ENCODE measurements at regions of chr1 and their contacts with region 1.

Region 1: GRCh38 chr1:205273551-205273982 is 45.8 kb downstream of the TMCC2 start:
- DNase-seq: peak; percentile 79 to 91
- ATAC-seq: peak; percentile 71 to 82 (median 80)
- H3K4me3 ChIP-seq: no peak overlapping the region
- H3K27ac ChIP-seq: no peak overlapping the region
- H3K4me1 ChIP-seq: peaks cover 32% of the 10 kb centered on the region
- H3K27me3 ChIP-seq: no peaks in the 10 kb centered on the region
- CTCF ChIP-seq: peak; percentile 99

Region 2: GRCh38 chr1:205325334-205325884 is 51.8 kb after region 1 on chr1:
- intact Hi-C with region 1: loop called (anchors 1 kb)
- DNase-seq: no peak
- ATAC-seq: peak; percentile 50 to 57 (median 56)
- H3K4me3 ChIP-seq: no peak overlapping the region
- H3K27ac ChIP-seq: no peak overlapping the region
- H3K4me1 ChIP-seq: peaks cover 19% of the 10 kb centered on the region
- H3K27me3 ChIP-seq: no peaks in the 10 kb centered on the region
- CTCF ChIP-seq: peak; percentile 83

Region 3: GRCh38 chr1:205438213-205439157 is 164.9 kb after region 1 on chr1:
- intact Hi-C with region 1: loop called in 1 of 2 experiments (anchors 5 kb)
- DNase-seq: peak; percentile 75 to 88
- ATAC-seq: peak; percentile 69 to 87 (median 78)
- H3K4me3 ChIP-seq: no peak overlapping the region
- H3K27ac ChIP-seq: peak overlapping the region; percentile 12
- H3K4me1 ChIP-seq: peaks cover 61% of the 10 kb centered on the region
- H3K27me3 ChIP-seq: no peaks in the 10 kb centered on the region
- CTCF ChIP-seq: peak; percentile 68

Region 4: DNA sequence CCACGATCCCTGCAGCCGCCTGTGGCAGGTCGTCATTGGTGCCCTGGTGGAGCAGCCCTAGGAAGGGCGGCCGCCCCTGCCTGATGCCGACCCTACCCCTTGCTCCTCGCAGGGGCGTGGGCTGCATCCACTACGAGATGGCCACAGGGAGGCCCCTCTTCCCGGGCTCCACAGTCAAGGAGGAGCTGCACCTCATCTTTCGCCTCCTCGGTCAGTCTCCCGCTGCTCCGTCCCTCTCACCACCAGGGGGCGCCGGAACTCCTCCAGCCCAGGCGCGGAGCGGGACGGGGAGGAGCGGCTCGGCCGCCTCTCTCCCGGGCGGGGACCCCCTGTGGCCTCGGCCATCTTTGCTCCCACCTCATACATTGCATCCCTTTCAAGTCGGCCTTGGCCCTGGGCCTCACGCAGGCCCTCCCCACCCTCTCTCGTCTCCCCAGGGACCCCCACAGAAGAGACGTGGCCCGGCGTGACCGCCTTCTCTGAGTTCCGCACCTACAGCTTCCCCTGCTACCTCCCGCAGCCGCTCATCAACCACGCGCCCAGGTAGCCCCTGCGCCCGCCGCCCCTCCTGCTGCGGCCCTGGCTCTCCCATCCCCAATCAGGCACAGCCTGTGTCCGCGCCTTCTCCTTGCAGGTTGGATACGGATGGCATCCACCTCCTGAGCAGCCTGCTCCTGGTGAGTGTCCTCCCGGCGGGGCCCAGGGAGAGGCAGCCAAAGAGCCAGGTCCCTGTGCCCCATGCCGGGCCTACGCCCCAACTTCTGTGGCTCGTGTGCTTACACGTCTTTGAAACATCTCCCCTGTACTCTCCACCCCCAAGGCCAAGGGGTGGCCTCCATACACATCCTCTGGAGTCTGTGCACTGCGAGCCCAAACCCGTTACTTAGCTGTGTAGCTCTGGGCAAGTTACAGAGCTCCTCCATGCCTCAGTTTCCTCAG is 255.6 kb after region 1 on chr1:
- intact Hi-C with region 1: loop called in 1 of 2 experiments (anchors 10 kb)
- DNase-seq: peak; percentile 85 to 90
- ATAC-seq: peak; percentile 78 to 90 (median 80)
- H3K4me3 ChIP-seq: peak overlapping the region; percentile 55
- H3K27ac ChIP-seq: no peak overlapping the region
- H3K4me1 ChIP-seq: no peaks in the 10 kb centered on the region
- H3K27me3 ChIP-seq: no peaks in the 10 kb centered on the region
- CTCF ChIP-seq: peak; percentile 91

Measured in psoas muscle (tissue), 8 donors.